Activated naive CD4-positive, alpha-beta T cell treated with anti-CD3 and anti-CD28 coated beads, Interleukin-2, amount 10 ng/mL, durations not matched to agents 7 days and 5 days (primary cell): ENCODE measurements at regions of chr12 and their contacts with region 1.

Region 1: DNA sequence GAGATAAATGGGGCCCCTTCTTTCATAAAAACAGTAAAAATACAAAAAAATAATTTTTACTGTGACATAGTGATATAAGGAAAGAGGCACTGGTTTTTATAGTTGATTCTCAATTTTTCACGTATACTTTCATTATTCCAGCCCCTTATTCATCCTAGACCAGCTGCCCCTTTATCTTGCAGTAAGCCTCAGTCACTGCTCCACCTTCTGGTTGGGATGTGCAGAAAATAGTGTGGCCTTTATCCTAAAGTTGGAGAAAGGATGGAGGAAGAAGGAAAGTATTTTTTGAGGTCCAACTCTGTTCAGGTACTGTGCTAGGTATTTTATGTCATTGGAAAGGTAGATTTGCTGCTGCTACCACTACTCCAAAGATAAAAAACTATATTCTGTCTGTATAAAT is 172.7 kb downstream of the ANO6 start:
- DNase-seq: no peak
- H3K4me3 Mint-ChIP-seq: no peak overlapping the region
- H3K27ac Mint-ChIP-seq: no peak overlapping the region
- H3K4me1 Mint-ChIP-seq: no peaks in the 10 kb centered on the region
- H3K27me3 Mint-ChIP-seq: no peaks in the 10 kb centered on the region

Region 2: GRCh38 chr12:45170456-45171042 is 218.0 kb before region 1 on chr12:
- CTCF ChIA-PET with region 1: interaction called, 11 read pairs
- DNase-seq: peak; percentile 87
- H3K4me3 Mint-ChIP-seq: no peak overlapping the region
- H3K27ac Mint-ChIP-seq: no peak overlapping the region
- H3K4me1 Mint-ChIP-seq: no peaks in the 10 kb centered on the region
- H3K27me3 Mint-ChIP-seq: no peaks in the 10 kb centered on the region

Region 3: DNA sequence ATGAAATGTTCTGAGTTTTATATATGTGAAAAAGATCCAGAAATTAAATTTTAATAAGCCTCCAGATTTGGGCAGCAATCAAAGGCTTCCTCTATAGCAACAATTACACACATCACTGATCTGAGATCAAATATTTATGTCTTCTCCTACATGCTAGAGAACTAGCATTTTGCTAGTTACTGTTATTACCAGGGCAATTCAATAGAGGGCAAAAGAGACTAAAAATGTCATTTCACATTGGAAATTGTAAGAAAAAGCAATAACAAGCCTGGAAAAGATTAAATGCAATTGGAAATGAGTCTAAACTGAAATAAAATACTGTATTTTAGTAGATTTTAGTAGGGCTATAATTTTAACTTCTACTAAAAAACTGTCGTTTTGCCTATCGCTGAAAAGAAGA is 205.3 kb before region 1 on chr12:
- CTCF ChIA-PET with region 1: interaction called, 16 read pairs
- DNase-seq: no peak
- H3K4me3 Mint-ChIP-seq: no peak overlapping the region
- H3K27ac Mint-ChIP-seq: no peak overlapping the region
- H3K4me1 Mint-ChIP-seq: no peaks in the 10 kb centered on the region
- H3K27me3 Mint-ChIP-seq: no peaks in the 10 kb centered on the region